ENCODE measurements at regions of chr12 and their contacts with region 1.

Region 1: GRCh38 chr12:47963340-47964040 is at the start of gene TMEM106C:
- DNase-seq: peak; percentile 89
- ATAC-seq: peak; percentile 96
- H3K4me3 Mint-ChIP-seq: peak within 1 kb of the TSS; percentile 97
- H3K27ac Mint-ChIP-seq: peak within 1 kb of the TSS; percentile 86
- H3K4me1 Mint-ChIP-seq: peaks cover 18% of the 10 kb centered on the region
- H3K27me3 Mint-ChIP-seq: peaks cover 11% of the 10 kb centered on the region
- CTCF ChIP-seq: peak; percentile 37
- total RNA-seq, gene TMEM106C: 24.5 and 31.3 TPM in 2 replicates

Region 2: DNA sequence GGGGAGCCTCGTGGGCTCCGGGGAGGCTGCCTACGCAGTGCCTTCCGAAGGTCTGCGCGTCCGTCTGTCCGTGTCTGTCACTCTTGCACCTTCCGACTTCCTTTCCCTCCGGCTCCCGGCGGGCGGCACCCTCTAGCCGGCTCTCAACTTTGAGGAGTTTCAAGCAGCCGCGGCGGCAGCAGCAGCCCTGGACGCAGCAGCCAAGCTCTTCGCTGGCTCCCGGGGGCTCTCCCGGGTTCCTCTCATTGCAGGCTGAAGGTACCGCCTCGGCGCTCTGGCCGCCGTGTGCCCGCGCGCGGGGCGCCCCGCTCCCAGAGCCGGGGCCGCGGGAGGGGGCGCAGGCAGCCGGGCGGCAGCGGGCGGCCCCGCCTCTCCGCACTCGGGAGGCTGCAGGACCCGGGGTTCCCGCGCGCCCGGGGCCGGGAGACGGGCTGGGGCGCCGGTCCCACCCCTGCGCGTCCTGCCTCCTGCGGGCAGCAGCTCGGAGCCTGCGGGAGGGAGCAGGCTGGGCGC is 884.0 kb before region 1 on chr12 and contains the starts of genes AMIGO2 and PCED1B:
- CTCF ChIA-PET with region 1: no interaction called
- POLR2A ChIA-PET with region 1: no interaction called
- intact Hi-C with region 1: loop called (anchors 10 kb)
- DNase-seq: no peak
- ATAC-seq: peak; percentile 47
- H3K4me3 Mint-ChIP-seq: peak within 1 kb of the TSS; percentile 99
- H3K27ac Mint-ChIP-seq: peak within 1 kb of the TSS; percentile 95
- H3K4me1 Mint-ChIP-seq: peaks cover 67% of the 10 kb centered on the region
- H3K27me3 Mint-ChIP-seq: no peaks in the 10 kb centered on the region
- CTCF ChIP-seq: no peak
- total RNA-seq, gene AMIGO2: 13.9 and 14.1 TPM in 2 replicates
- total RNA-seq, gene PCED1B: 60.9 and 65.4 TPM in 2 replicates

Region 3: DNA sequence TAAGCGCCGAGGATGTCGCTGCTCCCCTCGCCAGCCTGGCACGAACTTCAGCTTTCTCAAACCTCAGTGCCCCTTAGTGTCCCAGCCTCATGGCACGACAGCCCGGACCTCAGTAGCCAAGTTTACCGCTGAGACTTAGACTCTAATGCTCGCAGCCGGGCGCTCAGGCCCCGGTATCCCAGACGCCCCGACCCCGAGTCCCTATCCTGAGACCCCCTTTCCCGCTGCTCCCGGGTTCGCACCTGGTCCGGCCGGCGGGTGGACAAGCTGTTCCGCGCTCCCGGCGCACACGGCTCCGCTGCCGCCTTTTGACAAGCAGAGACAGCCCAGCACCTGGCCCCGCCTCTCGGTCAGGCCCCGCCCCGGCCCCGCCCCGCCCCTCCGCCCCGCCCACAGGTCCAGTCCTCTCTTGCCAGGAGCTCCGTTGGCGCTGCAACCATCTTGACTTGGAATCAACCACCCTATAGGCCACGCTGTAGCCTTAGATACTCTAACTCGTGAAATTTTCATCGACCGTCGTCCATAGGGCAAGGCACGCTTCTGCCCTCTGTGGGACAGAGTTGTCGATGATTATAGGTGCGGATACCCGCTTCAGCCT is 58.7 kb before region 1 on chr12 and contains the start of gene VDR:
- CTCF ChIA-PET with region 1: interaction called, 7 read pairs
- POLR2A ChIA-PET with region 1: no interaction called
- intact Hi-C with region 1: loop called (anchors 1 kb)
- DNase-seq: peak; percentile 59
- ATAC-seq: peak; percentile 83
- H3K4me3 Mint-ChIP-seq: peak within 1 kb of the TSS; percentile 87
- H3K27ac Mint-ChIP-seq: peak within 1 kb of the TSS; percentile 41
- H3K4me1 Mint-ChIP-seq: peaks cover 23% of the 10 kb centered on the region
- H3K27me3 Mint-ChIP-seq: peaks cover 26% of the 10 kb centered on the region
- CTCF ChIP-seq: no peak
- total RNA-seq, gene VDR: 0.64 and 0.86 TPM in 2 replicates

Region 4: GRCh38 chr12:48001505-48002413 is 38.3 kb after region 1 on chr12:
- CTCF ChIA-PET with region 1: no interaction called
- POLR2A ChIA-PET with region 1: interaction called, 3 read pairs
- intact Hi-C with region 1: loop called (anchors 5 kb)
- DNase-seq: no peak
- ATAC-seq: peak; percentile 21
- H3K4me3 Mint-ChIP-seq: peak overlapping the region; percentile 71
- H3K27ac Mint-ChIP-seq: no peak overlapping the region
- H3K4me1 Mint-ChIP-seq: peaks cover 36% of the 10 kb centered on the region
- H3K27me3 Mint-ChIP-seq: peaks cover 80% of the 10 kb centered on the region
- CTCF ChIP-seq: no peak

Region 5: DNA sequence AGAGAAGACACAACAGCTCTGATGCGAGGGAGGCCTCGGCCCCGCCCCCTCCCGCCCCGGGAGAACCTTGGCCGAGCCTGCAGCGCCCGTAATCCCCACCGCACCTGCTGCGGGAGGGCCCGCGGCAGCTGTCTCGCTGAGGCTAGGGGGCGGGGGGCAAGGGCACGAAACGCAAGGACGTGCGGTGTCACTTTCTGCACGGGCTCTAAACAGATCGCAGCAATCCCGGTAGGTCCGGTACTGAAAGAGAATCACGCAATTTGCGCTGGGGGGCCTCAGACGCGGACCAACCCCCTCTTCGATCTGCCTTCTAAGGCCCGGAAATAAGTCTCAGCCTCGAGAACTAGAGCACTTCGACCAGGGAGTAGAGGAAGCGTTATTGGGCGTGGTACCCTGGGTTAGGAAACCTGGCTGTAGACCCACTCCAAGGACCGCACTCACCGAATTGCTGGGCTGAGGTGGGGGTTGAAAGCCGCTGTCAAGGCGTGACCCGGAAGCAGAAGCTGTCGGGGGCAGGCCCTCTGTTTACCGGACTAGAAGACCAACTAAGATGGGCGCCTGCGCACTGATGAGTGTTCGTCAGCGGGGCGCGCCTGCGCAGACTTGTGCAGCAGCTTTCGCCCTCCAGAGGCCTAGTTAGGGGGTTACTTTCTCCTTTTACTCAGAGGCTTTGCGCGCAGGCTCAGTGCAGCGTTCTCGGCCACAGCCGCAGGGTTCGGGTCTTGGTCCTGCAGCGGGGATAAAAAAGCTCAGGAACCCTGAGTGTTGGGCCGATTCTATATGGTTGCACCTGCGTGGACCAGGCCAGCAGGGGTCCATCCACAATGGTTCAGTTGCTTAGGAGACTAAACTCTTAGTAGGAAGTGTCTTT is 193.8 kb after region 1 on chr12 and contains the start of gene ASB8:
- CTCF ChIA-PET with region 1: no interaction called
- POLR2A ChIA-PET with region 1: interaction called, 5 read pairs
- intact Hi-C with region 1: loop called (anchors 1 kb)
- DNase-seq: peak; percentile 96
- ATAC-seq: peak; percentile 93
- H3K4me3 Mint-ChIP-seq: peak within 1 kb of the TSS; percentile 96
- H3K27ac Mint-ChIP-seq: peak within 1 kb of the TSS; percentile 97
- H3K4me1 Mint-ChIP-seq: peaks cover 26% of the 10 kb centered on the region
- H3K27me3 Mint-ChIP-seq: peaks cover 2% of the 10 kb centered on the region
- CTCF ChIP-seq: no peak
- total RNA-seq, gene ASB8: 40.0 and 43.6 TPM in 2 replicates

Region 6: DNA sequence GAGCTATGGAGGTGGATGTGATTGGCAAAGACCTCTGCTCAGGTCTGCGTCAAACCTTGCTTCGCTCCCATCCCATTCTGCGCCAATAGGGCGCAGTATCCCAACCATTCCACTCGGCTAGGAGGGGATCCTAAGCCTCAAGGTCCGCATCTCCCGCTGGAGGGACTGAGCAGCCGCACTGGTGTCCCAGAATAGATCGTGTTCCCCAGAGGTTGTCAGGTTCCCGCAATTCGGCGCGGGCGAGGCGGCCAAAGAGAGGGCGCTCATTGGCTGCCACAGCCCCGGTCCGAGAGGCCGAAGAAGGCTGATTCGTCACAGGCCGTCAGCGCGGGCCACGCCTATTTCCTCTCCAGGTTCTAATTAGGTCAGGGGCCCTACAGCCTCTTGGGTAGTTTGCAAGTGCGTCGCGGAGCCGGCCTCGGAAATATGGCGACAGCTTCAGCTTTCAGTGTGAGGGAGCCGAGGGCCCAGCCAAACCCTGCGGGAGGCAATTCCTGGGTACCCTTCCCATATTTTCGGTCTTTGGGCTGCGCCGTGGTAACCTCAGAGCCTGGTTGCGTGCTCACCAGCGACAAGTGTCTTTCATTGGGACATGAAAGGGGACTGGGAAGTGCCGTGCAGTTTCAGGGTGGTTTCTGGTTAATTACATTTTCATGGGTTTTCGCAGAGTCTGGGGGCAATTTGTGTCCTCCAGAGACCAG is 234.6 kb after region 1 on chr12:
- CTCF ChIA-PET with region 1: no interaction called
- POLR2A ChIA-PET with region 1: no interaction called
- intact Hi-C with region 1: loop called (anchors 1 kb)
- DNase-seq: peak; percentile 84
- ATAC-seq: peak; percentile 98
- H3K4me3 Mint-ChIP-seq: peak overlapping the region; percentile 96
- H3K27ac Mint-ChIP-seq: peak overlapping the region; percentile 99
- H3K4me1 Mint-ChIP-seq: peaks cover 26% of the 10 kb centered on the region
- H3K27me3 Mint-ChIP-seq: peaks cover 17% of the 10 kb centered on the region
- CTCF ChIP-seq: no peak